ENCODE measurements at regions of chr3 and their contacts with region 1.

Region 1: GRCh38 chr3:138935848-138936740 is 10.8 kb downstream of the FOXL2 start:
- DNase-seq: peak; percentile 30 to 81 (median 67)
- ATAC-seq: peak; percentile 90
- H3K4me3 ChIP-seq: peak overlapping the region; percentile 55
- H3K4me3 Mint-ChIP-seq: peak overlapping the region; percentile 60 to 86 (median 76)
- H3K27ac ChIP-seq: no peak overlapping the region
- H3K27ac Mint-ChIP-seq: peak overlapping the region in 1 of 9 donors; percentile 29
- H3K4me1 ChIP-seq: peaks cover 21 to 31% of the 10 kb centered on the region in 2 donors
- H3K4me1 Mint-ChIP-seq: peaks cover 19 to 43% (median 31%) of the 10 kb centered on the region in 7 donors
- H3K27me3 ChIP-seq: peaks cover 14 to 50% of the 10 kb centered on the region in 2 donors
- H3K27me3 Mint-ChIP-seq: peaks cover 55 to 84% (median 77%) of the 10 kb centered on the region in 5 donors

Region 2: DNA sequence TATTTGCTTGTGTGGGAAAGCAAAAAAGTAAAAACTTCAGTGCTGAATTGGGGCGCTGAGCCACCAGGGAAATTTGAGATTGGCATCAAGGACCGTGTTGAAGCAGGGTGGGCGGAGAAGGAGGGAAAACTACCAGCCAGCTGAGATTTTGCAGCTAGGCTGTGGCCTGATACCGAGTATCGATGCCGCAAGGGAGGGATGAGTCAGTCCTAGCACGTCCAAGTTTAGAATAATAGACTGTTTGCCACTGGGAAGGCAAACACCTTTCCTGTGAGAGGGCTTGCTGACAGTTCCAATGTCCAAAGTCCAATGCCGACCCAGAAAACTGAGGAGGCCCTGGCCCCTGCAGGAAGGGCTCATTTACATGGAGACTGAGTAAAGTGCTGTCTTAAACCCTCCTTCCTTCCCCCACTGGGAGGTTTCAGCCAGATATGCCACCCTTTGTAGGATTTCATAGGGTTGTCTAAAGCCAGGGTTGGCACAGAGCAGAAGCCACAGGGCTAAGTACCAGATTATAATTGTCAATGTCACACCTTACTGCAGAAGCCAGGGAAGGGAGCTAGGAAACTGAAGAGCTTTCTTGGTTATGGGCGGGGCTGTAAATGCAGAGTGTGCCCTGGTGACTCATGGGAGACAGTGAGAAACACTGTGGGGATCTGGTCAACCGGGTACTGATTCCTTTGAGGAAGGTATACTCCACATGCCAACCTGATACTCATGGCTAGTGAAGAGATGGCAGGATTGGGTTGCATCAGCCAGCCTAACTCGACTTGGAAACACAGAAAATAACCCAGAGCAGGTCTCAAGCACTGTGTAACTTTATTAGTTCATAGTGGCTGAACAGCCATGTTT is 72.9 kb before region 1 on chr3:
- CTCF ChIA-PET with region 1: no interaction called
- POLR2A ChIA-PET with region 1: no interaction called
- intact Hi-C with region 1: no loop called
- DNase-seq: no peak
- ATAC-seq: peak; percentile 83
- H3K4me3 ChIP-seq: no peak overlapping the region
- H3K4me3 Mint-ChIP-seq: no peak overlapping the region
- H3K27ac ChIP-seq: no peak overlapping the region
- H3K27ac Mint-ChIP-seq: peak overlapping the region in 3 of 9 donors; percentile 11 to 72 (median 14)
- H3K4me1 ChIP-seq: no peaks in the 10 kb centered on the region
- H3K4me1 Mint-ChIP-seq: peaks cover 0 to 9% (median 0%) of the 10 kb centered on the region in 7 donors
- H3K27me3 ChIP-seq: no peaks in the 10 kb centered on the region
- H3K27me3 Mint-ChIP-seq: no peaks in the 10 kb centered on the region

Region 3: DNA sequence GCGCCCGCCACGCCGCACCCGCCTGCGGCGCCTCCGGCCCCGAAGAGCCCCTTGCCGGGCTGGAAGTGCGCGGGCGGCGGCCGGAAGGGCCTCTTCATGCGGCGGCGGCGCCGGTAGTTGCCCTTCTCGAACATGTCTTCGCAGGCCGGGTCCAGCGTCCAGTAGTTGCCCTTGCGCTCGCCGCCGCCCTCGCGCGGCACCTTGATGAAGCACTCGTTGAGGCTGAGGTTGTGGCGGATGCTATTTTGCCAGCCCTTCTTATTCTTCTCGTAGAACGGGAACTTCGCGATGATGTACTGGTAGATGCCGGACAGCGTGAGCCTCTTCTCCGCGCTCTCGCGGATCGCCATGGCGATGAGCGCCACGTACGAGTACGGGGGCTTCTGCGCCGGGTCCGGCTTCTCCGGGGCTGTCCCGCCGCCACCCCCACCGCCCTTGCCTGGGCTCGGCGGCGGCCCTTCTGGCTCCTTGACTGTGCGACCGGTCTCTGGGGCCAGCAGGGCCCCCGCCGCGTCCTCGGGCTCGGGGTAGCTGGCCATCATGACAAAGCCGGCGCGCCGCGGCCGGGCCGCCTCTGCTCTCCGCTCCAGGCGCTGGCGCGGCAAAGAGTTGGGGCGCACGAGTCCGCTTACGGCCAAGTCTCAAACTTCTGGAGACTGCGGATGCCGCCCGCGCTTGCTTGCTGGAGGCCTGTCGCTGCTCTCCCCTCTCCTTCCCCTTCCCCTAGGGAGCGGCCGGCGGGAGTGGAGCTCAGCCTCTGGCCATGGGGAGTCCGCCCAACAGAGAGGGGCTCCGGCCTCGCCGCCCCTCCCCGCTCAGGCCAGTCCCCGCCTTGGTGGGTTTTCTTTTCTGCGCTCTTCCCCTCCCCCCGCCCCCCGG is 10.3 kb after region 1 on chr3:
- CTCF ChIA-PET with region 1: interaction called, 4 read pairs
- POLR2A ChIA-PET with region 1: no interaction called
- intact Hi-C with region 1: loop called (anchors 1 kb)
- DNase-seq: peak in 1 of 9 donors; percentile 18
- ATAC-seq: peak; percentile 22
- H3K4me3 ChIP-seq: peak overlapping the region; percentile 57
- H3K4me3 Mint-ChIP-seq: peak overlapping the region; percentile 34 to 92 (median 71)
- H3K27ac ChIP-seq: no peak overlapping the region
- H3K27ac Mint-ChIP-seq: peak overlapping the region in 1 of 9 donors; percentile 46
- H3K4me1 ChIP-seq: peaks cover 6 to 19% of the 10 kb centered on the region in 2 donors
- H3K4me1 Mint-ChIP-seq: peaks cover 26 to 55% (median 39%) of the 10 kb centered on the region in 7 donors
- H3K27me3 ChIP-seq: peaks cover 5 to 64% of the 10 kb centered on the region in 2 donors
- H3K27me3 Mint-ChIP-seq: peaks cover 74 to 90% (median 79%) of the 10 kb centered on the region in 5 donors

Region 4: GRCh38 chr3:139111392-139112229 is 175.5 kb after region 1 on chr3:
- CTCF ChIA-PET with region 1: no interaction called
- POLR2A ChIA-PET with region 1: no interaction called
- intact Hi-C with region 1: loop called in 1 of 2 experiments (anchors 10 kb)
- DNase-seq: peak in 8 of 9 donors; percentile 10 to 62 (median 36)
- ATAC-seq: peak; percentile 64
- H3K4me3 ChIP-seq: no peak overlapping the region
- H3K4me3 Mint-ChIP-seq: no peak overlapping the region
- H3K27ac ChIP-seq: no peak overlapping the region
- H3K27ac Mint-ChIP-seq: no peak overlapping the region
- H3K4me1 ChIP-seq: no peaks in the 10 kb centered on the region
- H3K4me1 Mint-ChIP-seq: peaks cover 0 to 7% (median 6%) of the 10 kb centered on the region in 7 donors
- H3K27me3 ChIP-seq: no peaks in the 10 kb centered on the region
- H3K27me3 Mint-ChIP-seq: peaks cover 13 to 33% (median 22%) of the 10 kb centered on the region in 5 donors

Region 5: DNA sequence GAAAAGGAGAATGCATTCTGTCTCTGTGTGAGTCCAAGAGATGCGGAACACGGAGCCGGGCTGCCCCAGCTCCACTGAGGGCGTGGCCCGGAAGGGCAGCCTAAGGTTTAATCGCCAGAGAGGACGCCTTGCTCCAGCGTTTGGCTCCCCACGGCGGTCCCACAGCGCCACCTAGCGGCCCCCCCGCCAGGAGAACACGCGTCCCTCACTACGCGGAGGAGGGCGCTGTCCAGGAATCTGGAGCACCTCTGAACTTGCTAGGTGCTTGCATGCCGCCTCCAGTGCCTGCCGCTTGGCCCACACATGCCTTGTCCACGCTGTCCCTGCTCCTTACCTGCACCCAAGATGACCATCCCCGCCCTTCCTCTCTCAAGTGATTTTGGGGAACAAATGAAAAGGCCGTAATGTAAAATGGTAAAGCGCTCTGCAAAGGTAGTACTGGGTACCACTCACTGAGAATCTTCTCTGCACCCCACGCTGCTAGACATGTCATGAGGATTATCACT is 393.3 kb after region 1 on chr3:
- CTCF ChIA-PET with region 1: interaction called, 5 read pairs
- POLR2A ChIA-PET with region 1: no interaction called
- intact Hi-C with region 1: loop called (anchors 1 kb)
- DNase-seq: peak; percentile 68 to 95 (median 82)
- ATAC-seq: peak; percentile 98
- H3K4me3 ChIP-seq: no peak overlapping the region
- H3K4me3 Mint-ChIP-seq: peak overlapping the region; percentile 45 to 85 (median 70)
- H3K27ac ChIP-seq: no peak overlapping the region
- H3K27ac Mint-ChIP-seq: peak overlapping the region in 3 of 9 donors; percentile 10 to 40 (median 22)
- H3K4me1 ChIP-seq: peaks cover 0 to 5% of the 10 kb centered on the region in 2 donors
- H3K4me1 Mint-ChIP-seq: peaks cover 8 to 26% (median 19%) of the 10 kb centered on the region in 7 donors
- H3K27me3 ChIP-seq: no peaks in the 10 kb centered on the region
- H3K27me3 Mint-ChIP-seq: peaks cover 24 to 37% (median 29%) of the 10 kb centered on the region in 5 donors

Region 6: DNA sequence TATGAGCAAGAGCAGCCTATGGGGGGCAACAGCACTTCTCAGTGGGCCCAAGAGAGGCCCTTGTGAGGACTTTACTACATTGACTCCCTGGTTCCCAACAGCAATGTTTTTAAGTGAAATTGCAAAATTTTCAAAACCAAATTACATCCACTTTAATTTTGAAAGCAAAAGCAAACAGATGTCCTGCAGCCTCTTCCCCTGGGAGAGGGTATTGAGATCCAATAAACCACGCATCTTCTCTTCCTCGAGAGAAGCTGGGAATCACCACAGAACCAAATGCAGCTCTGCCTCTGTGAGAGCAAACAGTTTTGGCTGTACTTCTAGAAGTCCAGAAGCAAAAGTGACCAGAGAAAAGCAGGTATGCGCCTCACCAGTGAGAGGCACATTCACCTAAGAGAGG is 716.5 kb after region 1 on chr3:
- CTCF ChIA-PET with region 1: no interaction called
- POLR2A ChIA-PET with region 1: no interaction called
- intact Hi-C with region 1: no loop called
- DNase-seq: no peak
- ATAC-seq: no peak
- H3K4me3 ChIP-seq: no peak overlapping the region
- H3K4me3 Mint-ChIP-seq: no peak overlapping the region
- H3K27ac ChIP-seq: no peak overlapping the region
- H3K27ac Mint-ChIP-seq: no peak overlapping the region
- H3K4me1 ChIP-seq: no peaks in the 10 kb centered on the region
- H3K4me1 Mint-ChIP-seq: peaks cover 0 to 4% (median 0%) of the 10 kb centered on the region in 7 donors
- H3K27me3 ChIP-seq: no peaks in the 10 kb centered on the region
- H3K27me3 Mint-ChIP-seq: no peaks in the 10 kb centered on the region

Region 7: GRCh38 chr3:140863580-140864009 is 1927.5 kb after region 1 on chr3:
- CTCF ChIA-PET with region 1: no interaction called
- POLR2A ChIA-PET with region 1: no interaction called
- intact Hi-C with region 1: loop called in 1 of 2 experiments (anchors 5 kb)
- DNase-seq: peak in 7 of 9 donors; percentile 5 to 56 (median 33)
- ATAC-seq: no peak
- H3K4me3 ChIP-seq: no peak overlapping the region
- H3K4me3 Mint-ChIP-seq: no peak overlapping the region
- H3K27ac ChIP-seq: no peak overlapping the region
- H3K27ac Mint-ChIP-seq: no peak overlapping the region
- H3K4me1 ChIP-seq: no peaks in the 10 kb centered on the region
- H3K4me1 Mint-ChIP-seq: peaks cover 0 to 4% (median 0%) of the 10 kb centered on the region in 7 donors
- H3K27me3 ChIP-seq: no peaks in the 10 kb centered on the region
- H3K27me3 Mint-ChIP-seq: peaks cover 6 to 18% (median 11%) of the 10 kb centered on the region in 5 donors

Measured in naive thymus-derived CD4-positive, alpha-beta T cell (primary cell).